Heart left ventricle (tissue), 16 donors: ENCODE measurements at regions of chr5 and their contacts with region 1.

Region 1: GRCh38 chr5:55959208-55959607 is 35.6 kb downstream of the IL6ST start:
- DNase-seq: no peak
- ATAC-seq: no peak
- H3K4me3 ChIP-seq: no peak overlapping the region
- H3K27ac ChIP-seq: no peak overlapping the region
- H3K4me1 ChIP-seq: peaks cover 0 to 3% (median 0%) of the 10 kb centered on the region in 12 donors
- H3K27me3 ChIP-seq: no peaks in the 10 kb centered on the region
- CTCF ChIP-seq: no peak
- POLR2A ChIP-seq: no peak

Region 2: GRCh38 chr5:55278778-55279177 is 680.4 kb before region 1 on chr5:
- intact Hi-C with region 1: loop called in 1 of 10 experiments (anchors 10 kb)
- DNase-seq: no peak
- ATAC-seq: no peak
- H3K4me3 ChIP-seq: no peak overlapping the region
- H3K27ac ChIP-seq: no peak overlapping the region
- H3K4me1 ChIP-seq: no peaks in the 10 kb centered on the region
- H3K27me3 ChIP-seq: no peaks in the 10 kb centered on the region
- CTCF ChIP-seq: no peak
- POLR2A ChIP-seq: no peak

Region 3: DNA sequence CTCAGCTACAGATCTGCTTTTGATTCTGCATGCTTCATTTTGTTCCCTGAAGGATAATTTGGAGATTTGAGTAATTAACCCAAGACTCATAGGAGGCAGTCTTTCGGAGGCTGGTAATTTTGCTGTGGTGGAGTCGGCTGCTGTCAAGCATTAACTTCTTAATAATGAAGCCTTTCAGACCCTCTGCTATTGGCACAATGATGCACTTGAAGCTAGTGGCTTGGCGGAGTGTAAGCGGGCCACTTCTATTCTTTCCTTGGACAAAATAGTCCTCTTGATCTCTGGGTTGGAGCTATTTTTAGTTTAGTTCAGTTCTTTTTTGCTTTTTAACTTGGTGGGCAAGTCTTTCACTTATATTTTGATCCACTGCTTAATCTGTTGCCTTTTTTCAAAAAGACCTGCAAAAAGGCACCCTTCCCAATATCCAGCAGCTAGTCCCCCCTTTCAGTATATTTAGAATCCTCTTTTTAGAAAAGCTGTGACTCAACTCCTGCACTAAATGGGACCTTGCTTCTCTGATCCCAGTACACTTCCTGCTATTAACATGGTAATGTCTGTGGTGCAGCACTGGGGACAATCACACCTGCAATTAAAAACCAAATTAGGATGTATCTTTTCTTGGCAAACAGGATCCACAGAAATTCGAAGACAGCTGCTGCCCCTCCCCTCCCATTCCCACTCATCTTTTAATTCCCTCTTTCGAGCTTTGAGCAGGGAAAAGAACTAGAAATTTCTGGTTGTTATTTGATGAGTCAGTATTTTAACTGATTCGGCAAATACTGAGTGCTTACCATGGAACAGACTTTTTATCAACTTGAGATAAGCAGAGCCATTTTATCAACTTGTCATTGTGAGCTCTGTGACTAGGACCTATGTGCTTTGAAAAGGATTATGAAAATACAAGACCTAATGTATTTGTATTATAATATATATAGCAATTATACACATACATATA is 443.3 kb after region 1 on chr5:
- intact Hi-C with region 1: no loop called
- DNase-seq: no peak
- ATAC-seq: no peak
- H3K4me3 ChIP-seq: no peak overlapping the region
- H3K27ac ChIP-seq: peak overlapping the region in 1 of 12 donors; percentile 26
- H3K4me1 ChIP-seq: peaks cover 0 to 20% (median 6%) of the 10 kb centered on the region in 12 donors
- H3K27me3 ChIP-seq: no peaks in the 10 kb centered on the region
- CTCF ChIP-seq: no peak
- POLR2A ChIP-seq: no peak

Region 4: GRCh38 chr5:56876327-56876726 is 917.1 kb after region 1 on chr5:
- intact Hi-C with region 1: loop called in 1 of 10 experiments (anchors 10 kb)
- DNase-seq: no peak
- ATAC-seq: no peak
- H3K4me3 ChIP-seq: no peak overlapping the region
- H3K27ac ChIP-seq: no peak overlapping the region
- H3K4me1 ChIP-seq: peaks cover 0 to 10% (median 0%) of the 10 kb centered on the region in 12 donors
- H3K27me3 ChIP-seq: no peaks in the 10 kb centered on the region
- CTCF ChIP-seq: no peak
- POLR2A ChIP-seq: no peak

Region 5: GRCh38 chr5:56938858-56939257 is 979.6 kb after region 1 on chr5:
- intact Hi-C with region 1: loop called in 1 of 10 experiments (anchors 10 kb)
- DNase-seq: no peak
- ATAC-seq: no peak
- H3K4me3 ChIP-seq: no peak overlapping the region
- H3K27ac ChIP-seq: no peak overlapping the region
- H3K4me1 ChIP-seq: peaks cover 0 to 9% (median 0%) of the 10 kb centered on the region in 12 donors
- H3K27me3 ChIP-seq: no peaks in the 10 kb centered on the region
- CTCF ChIP-seq: no peak
- POLR2A ChIP-seq: no peak